Activated B cell treated with CpG ODN at 0.5 μM for 24 hours (primary cell): ENCODE measurements at regions of chr6 and their contacts with region 1.

Region 1: GRCh38 chr6:23483896-23484295 is 642.1 kb upstream of the NRSN1 start:
- DNase-seq: no peak
- ATAC-seq: no peak
- H3K4me3 Mint-ChIP-seq: no peak overlapping the region
- H3K27ac Mint-ChIP-seq: no peak overlapping the region
- H3K4me1 Mint-ChIP-seq: no peaks in the 10 kb centered on the region
- H3K27me3 Mint-ChIP-seq: no peaks in the 10 kb centered on the region
- CTCF ChIP-seq: no peak

Region 2: DNA sequence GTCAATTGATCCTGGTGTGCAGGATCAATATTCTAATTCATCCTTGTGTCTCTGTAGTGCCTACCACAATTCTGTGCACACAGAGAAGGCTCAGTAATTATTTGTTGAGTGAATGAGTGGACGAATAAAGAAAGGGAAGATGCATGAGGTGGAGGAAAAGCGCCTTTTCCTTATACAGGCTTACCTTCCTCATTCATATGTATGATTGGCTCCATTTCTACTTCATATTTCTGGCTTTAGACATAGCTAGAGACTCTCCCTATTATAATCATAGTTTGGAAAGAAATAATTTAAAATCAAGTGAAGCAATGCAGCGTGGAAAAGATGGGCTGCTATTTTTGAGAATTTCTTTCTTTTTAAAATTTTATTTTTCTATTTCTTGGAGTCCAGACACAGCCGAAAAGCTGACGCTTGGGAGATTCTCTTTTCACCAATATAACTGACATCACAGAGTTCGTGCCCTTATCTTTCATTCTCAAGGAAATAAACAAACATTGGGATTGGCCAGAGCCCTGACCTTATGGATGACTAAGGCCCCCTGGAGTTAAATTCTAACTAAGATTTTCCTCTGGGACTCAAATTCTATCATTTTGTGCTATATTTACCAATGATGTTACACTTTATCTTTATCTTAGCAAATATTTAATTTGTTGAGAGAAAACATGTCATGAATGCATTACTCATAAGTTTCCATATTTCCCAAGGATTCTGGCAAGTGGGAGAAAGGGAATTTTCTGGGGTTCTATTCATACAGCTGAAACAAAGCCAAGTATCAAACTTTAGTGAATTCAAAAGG is 1235.2 kb before region 1 on chr6:
- CTCF ChIA-PET with region 1: no interaction called
- POLR2A ChIA-PET with region 1: no interaction called
- intact Hi-C with region 1: loop called (anchors 5 kb)
- DNase-seq: no peak
- ATAC-seq: no peak
- H3K4me3 Mint-ChIP-seq: no peak overlapping the region
- H3K27ac Mint-ChIP-seq: no peak overlapping the region
- H3K4me1 Mint-ChIP-seq: no peaks in the 10 kb centered on the region
- H3K27me3 Mint-ChIP-seq: no peaks in the 10 kb centered on the region
- CTCF ChIP-seq: no peak

Region 3: DNA sequence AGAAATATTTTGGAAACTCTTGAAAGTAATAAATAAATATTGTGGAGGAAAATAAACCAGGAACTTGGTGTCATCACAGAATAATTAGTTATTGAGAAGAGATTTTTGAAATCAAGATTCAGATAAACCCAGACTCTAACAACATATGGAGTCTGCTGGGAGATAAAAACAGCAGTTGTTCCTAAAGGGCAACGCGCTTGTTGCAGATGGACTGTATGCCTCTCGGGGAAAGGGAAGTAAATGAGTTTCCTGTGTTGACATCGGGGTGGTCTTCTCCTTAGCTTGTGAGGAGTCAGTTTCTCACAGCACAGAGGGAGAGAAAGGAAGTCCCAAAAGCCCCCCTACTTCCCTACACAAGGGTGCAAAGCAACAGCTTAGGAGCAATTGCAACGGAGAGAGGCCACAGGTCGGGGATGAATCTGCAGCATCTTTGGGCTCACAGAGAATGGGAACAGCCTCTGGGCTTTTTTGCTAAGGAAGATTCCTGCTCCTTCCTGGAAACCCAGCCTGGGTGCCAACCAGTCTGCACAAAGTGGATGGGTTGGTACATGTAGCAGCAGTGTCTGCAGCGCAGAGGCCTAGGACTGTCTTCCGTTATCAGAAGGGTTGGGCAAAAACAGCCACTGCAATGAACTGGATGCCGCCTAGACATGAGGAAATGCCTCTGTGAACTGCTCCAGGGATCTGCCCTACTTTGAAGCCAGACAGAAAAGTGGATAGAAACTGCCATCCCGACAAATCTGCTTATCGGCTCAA is 39.1 kb after region 1 on chr6:
- CTCF ChIA-PET with region 1: no interaction called
- POLR2A ChIA-PET with region 1: no interaction called
- intact Hi-C with region 1: no loop called
- DNase-seq: no peak
- ATAC-seq: no peak
- H3K4me3 Mint-ChIP-seq: no peak overlapping the region
- H3K27ac Mint-ChIP-seq: no peak overlapping the region
- H3K4me1 Mint-ChIP-seq: no peaks in the 10 kb centered on the region
- H3K27me3 Mint-ChIP-seq: no peaks in the 10 kb centered on the region
- CTCF ChIP-seq: no peak